Heart left ventricle (tissue), 16 donors: ENCODE measurements at regions of chr4 and their contacts with region 1.

Region 1: DNA sequence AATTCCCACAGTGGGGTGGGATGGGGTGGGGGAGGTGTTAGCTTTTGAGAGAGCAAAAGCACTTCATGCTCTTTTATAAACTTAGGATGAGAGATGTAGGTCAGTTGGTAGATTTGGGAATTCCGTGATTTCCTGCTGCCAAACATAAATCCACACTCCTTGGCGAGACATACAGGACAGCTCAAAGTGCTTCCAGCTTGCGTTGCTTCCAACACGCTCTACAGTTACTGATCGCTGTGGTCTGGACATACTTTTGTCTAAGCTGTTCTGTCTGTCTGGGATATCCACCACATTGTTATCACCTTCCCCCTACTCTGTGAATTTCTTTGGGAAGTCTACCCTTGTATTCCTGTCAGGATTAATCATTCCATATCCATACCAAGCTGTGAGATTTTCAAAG is 117.5 kb downstream of the RAPGEF2 start:
- DNase-seq: no peak
- ATAC-seq: peak; percentile 70 to 81 (median 76)
- H3K4me3 ChIP-seq: no peak overlapping the region
- H3K27ac ChIP-seq: peak overlapping the region in 8 of 12 donors; percentile 11 to 48 (median 27)
- H3K4me1 ChIP-seq: peaks cover 3 to 65% (median 39%) of the 10 kb centered on the region in 12 donors
- H3K27me3 ChIP-seq: no peaks in the 10 kb centered on the region
- CTCF ChIP-seq: no peak
- POLR2A ChIP-seq: no peak

Region 2: DNA sequence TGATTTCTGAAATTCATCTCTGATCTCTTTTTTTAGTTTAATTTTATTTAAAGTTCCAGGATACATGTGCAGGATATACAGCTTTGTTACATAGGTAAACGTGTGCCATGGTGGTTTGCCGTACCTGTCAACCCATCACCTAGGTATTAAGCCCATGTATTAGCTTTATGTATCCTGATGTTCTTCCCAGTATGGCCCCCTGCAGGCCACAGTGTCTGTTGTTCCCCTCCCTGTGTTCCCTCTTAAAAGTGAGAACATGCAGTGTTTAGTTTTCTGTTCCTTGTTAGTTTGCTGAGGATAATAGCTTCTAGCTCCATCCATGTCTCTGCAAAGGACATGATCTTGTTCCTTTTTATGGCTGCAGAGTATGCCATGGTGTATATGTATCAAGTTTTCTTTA is 35.7 kb after region 1 on chr4:
- intact Hi-C with region 1: loop called in 1 of 10 experiments (anchors 2 kb)
- DNase-seq: no peak
- ATAC-seq: no peak
- H3K4me3 ChIP-seq: no peak overlapping the region
- H3K27ac ChIP-seq: no peak overlapping the region
- H3K4me1 ChIP-seq: peaks cover 0 to 46% (median 22%) of the 10 kb centered on the region in 12 donors
- H3K27me3 ChIP-seq: no peaks in the 10 kb centered on the region
- CTCF ChIP-seq: no peak
- POLR2A ChIP-seq: no peak

Region 3: DNA sequence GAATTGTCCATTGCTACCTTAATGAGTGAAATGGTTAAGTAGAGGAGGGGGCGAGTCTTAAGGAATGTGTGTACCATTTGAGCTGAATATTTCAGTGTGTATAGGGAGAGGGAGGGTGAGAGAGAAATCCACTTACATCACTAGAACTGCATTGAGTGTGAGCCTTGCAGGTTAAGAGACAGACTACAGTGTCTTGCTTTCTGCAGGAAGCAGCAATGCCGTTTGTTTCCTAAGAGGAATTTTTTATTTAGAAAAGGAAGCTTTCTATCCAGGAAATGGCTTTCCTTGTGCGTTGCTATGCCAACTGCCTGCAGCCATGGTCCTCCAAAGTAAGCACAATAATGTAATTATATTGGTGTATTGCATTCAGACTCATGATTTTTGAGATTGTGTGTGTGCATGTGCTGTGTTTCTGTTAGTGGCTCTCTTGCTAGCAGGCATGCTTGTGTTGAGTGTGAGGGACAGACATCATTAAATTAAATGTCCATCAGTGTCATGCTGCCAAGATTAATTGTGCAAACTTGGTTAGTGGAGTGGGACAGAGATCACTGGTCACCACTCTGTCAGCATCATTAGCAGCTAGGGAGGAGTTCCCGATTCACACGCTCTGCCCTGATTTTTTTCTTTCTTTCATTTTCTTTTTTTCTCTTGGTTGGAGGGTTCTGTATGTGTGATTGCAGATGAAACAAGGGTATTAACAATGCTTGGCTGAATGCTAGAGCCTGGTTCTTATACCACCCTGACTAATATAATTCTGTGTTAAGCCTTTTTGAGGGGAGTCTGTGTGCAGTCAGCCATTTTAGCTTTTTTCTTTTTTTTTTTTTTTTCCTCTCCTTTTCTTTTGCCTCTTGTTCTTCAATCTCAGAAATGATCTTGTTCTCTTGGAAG is 46.9 kb after region 1 on chr4:
- intact Hi-C with region 1: loop called in 1 of 10 experiments (anchors 5 kb)
- DNase-seq: no peak
- ATAC-seq: peak; percentile 29 to 70 (median 48)
- H3K4me3 ChIP-seq: peak overlapping the region in 11 of 12 donors; percentile 4 to 46 (median 34)
- H3K27ac ChIP-seq: peak overlapping the region in 11 of 12 donors; percentile 25 to 65 (median 55)
- H3K4me1 ChIP-seq: peaks cover 4 to 95% (median 60%) of the 10 kb centered on the region in 12 donors
- H3K27me3 ChIP-seq: no peaks in the 10 kb centered on the region
- CTCF ChIP-seq: no peak
- POLR2A ChIP-seq: no peak